Activated naive CD4-positive, alpha-beta T cell treated with anti-CD3 and anti-CD28 coated beads for 36 hours (primary cell): ENCODE measurements at regions of chr12 and their contacts with region 1.

Region 1: DNA sequence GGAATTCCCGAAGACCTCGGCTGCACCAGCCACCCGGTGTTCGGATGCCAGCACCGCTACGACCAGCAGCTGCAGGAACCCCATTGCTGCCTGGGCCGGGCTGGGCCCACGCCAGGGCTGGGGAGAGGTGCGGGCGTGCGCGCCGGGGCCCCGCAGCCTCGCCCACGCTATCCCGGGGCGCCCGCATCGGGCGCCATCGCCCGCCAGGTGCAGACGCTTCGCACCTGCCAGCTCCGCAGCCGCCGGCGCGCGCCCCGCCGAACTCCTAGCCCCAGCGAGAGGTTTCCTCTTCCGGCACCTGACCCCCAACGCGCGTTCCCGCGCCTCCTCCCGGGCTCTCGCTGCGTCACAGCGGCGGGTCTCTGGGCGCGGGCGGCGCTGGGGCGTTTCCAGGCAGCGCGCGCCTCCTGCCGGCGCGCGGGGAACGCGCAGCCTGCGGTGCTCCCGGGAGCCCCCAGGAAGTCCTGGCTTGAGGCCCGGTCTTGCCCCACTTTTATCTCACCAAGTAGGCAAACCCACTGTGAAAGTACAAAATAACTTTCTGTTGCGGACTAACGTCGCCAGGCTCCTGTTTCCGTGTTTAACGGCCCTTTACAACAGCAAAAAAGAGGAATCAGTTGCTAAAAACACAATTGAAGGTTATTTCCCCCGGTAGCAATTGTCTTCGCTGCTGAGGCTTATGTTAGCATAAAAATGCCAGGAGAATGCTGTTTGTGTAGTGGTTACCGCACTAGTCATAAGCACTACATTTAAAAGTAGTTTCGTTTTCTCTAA is at the start of gene TM7SF3:
- DNase-seq: peak; percentile 96
- H3K4me3 Mint-ChIP-seq: peak within 1 kb of the TSS; percentile 91
- H3K27ac Mint-ChIP-seq: peak within 1 kb of the TSS; percentile 88
- H3K4me1 Mint-ChIP-seq: peaks cover 45% of the 10 kb centered on the region
- H3K27me3 Mint-ChIP-seq: no peaks in the 10 kb centered on the region
- total RNA-seq, gene TM7SF3: 39.1 to 42.8 TPM

Region 2: DNA sequence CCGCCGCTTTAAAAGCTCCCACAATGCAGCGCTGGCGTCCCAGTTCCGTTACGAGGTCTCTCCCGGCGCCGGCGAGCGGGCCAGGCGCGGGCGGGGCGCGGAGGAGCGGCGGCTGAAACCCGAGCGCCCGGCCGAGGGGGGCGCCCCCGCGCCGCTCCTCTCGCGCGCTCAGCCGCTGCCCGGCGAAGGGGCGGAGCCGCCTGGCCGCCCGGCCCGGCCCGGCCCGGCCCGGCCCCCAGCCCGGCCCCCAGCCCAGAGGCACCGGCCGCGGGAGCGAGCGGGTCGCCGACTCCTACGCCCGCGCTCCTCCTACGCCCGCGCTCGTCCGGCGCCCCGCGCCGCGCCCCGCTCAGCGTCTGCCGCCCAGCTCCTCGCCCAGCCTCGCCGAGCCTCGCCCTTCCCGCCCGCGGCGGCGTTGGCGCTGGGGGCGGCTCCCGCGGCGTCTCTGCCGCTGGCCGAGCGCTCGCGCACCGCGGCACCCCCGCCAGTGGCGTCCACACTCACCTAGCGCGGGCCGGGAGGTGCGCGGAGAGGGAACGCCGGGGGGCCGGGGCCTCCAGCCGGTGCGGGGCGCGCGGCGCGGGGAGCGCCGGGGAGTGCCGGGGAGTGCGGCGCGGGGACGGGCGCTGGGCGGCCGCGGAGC is 1055.7 kb before region 1 on chr12 and contains the start of gene RASSF8:
- CTCF ChIA-PET with region 1: no interaction called
- intact Hi-C with region 1: loop called (anchors 10 kb)
- DNase-seq: peak; percentile 23
- H3K4me3 Mint-ChIP-seq: peak within 1 kb of the TSS; percentile 78
- H3K27ac Mint-ChIP-seq: no peak within 1 kb of the TSS
- H3K4me1 Mint-ChIP-seq: peaks cover 11% of the 10 kb centered on the region
- H3K27me3 Mint-ChIP-seq: peaks cover 58% of the 10 kb centered on the region
- total RNA-seq, gene RASSF8: 0.32 to 0.81 TPM

Region 3: DNA sequence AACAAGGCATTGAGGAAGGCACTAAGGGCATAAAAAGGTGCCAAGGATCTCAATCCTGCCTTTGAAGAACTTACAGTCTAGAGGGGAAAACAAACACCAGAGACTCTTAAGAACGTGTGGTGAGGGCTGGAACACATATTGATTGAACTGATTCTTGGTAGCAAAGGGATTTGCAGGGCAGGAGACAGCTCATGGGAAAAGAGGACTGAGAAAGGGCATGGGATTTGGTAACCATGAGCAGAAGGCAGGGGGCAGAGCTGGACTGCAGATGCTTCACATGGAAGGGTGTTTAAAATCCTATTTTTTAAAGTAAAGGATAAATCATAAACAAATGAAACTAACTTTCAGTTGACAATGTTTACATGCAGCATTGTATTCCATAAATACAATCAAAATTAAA is 384.4 kb before region 1 on chr12:
- CTCF ChIA-PET with region 1: no interaction called
- intact Hi-C with region 1: loop called (anchors 2 kb)
- DNase-seq: peak; percentile 11
- H3K4me3 Mint-ChIP-seq: no peak overlapping the region
- H3K27ac Mint-ChIP-seq: no peak overlapping the region
- H3K4me1 Mint-ChIP-seq: no peaks in the 10 kb centered on the region
- H3K27me3 Mint-ChIP-seq: no peaks in the 10 kb centered on the region

Region 4: GRCh38 chr12:26845057-26845666 is 169.1 kb before region 1 on chr12:
- CTCF ChIA-PET with region 1: no interaction called
- intact Hi-C with region 1: no loop called
- DNase-seq: peak; percentile 24
- H3K4me3 Mint-ChIP-seq: no peak overlapping the region
- H3K27ac Mint-ChIP-seq: no peak overlapping the region
- H3K4me1 Mint-ChIP-seq: peaks cover 10% of the 10 kb centered on the region
- H3K27me3 Mint-ChIP-seq: peaks cover 9% of the 10 kb centered on the region

Region 5: GRCh38 chr12:26884765-26885576 is 129.3 kb before region 1 on chr12:
- CTCF ChIA-PET with region 1: interaction called, 10 read pairs
- intact Hi-C with region 1: loop called (anchors 1 kb)
- DNase-seq: peak; percentile 92
- H3K4me3 Mint-ChIP-seq: peak overlapping the region; percentile 58
- H3K27ac Mint-ChIP-seq: no peak overlapping the region
- H3K4me1 Mint-ChIP-seq: peaks cover 6% of the 10 kb centered on the region
- H3K27me3 Mint-ChIP-seq: peaks cover 10% of the 10 kb centered on the region

Region 6: GRCh38 chr12:27052176-27052575 is 37.9 kb after region 1 on chr12:
- CTCF ChIA-PET with region 1: no interaction called
- intact Hi-C with region 1: no loop called
- DNase-seq: no peak
- H3K4me3 Mint-ChIP-seq: no peak overlapping the region
- H3K27ac Mint-ChIP-seq: no peak overlapping the region
- H3K4me1 Mint-ChIP-seq: no peaks in the 10 kb centered on the region
- H3K27me3 Mint-ChIP-seq: no peaks in the 10 kb centered on the region

Region 7: GRCh38 chr12:27142101-27142721 is 127.9 kb after region 1 on chr12:
- CTCF ChIA-PET with region 1: interaction called, 3 read pairs
- intact Hi-C with region 1: loop called (anchors 1 kb)
- DNase-seq: peak; percentile 61
- H3K4me3 Mint-ChIP-seq: no peak overlapping the region
- H3K27ac Mint-ChIP-seq: no peak overlapping the region
- H3K4me1 Mint-ChIP-seq: peaks cover 10% of the 10 kb centered on the region
- H3K27me3 Mint-ChIP-seq: no peaks in the 10 kb centered on the region

Region 8: DNA sequence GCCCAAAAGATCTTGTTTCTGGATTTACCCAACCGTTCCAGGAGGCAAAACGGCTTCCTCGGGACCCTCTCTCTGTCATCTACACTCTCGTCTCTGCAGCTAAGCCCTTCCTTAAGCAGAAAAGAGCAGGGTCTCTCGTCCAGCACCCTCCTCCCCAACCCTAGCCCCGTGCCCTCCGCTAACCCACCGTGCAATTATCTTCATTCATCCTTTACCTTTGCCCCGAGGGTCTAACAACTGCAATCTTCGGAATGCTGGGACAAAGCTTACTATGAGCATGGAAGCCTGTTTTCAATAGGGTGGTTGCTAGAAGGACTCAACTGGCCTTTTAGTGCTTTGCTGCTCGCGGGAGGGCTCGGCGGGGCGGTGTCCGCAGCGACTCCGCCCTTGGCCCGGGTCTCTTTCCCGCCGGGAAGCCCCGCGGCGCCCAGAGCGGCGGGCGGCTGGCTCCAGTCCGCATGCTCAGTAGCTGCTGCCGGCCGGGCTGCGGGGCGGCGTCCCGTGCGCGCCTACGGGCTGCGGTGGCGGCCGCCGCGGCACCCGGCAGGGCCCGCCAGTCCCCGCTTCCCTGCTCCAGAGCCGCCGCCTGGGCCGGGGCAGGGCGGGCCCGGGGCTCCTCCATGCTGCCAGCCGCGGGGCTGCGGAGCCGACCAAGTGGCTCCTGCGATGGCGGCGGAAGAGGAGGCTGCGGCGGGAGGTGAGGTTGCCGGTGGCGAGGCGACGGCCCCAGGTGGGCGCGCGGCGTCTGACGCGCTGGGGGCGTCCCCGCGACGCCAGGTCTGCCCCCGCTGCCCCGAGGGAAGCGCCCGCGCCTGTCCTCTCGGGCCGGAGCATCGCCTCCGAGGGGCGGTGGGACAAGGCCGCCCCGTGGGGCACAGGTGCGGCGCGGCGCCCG is 318.4 kb after region 1 on chr12 and contains the start of gene BMAL2:
- CTCF ChIA-PET with region 1: no interaction called
- intact Hi-C with region 1: loop called (anchors 1 kb)
- DNase-seq: peak; percentile 44
- H3K4me3 Mint-ChIP-seq: peak within 1 kb of the TSS; percentile 90
- H3K27ac Mint-ChIP-seq: peak within 1 kb of the TSS; percentile 74
- H3K4me1 Mint-ChIP-seq: peaks cover 34% of the 10 kb centered on the region
- H3K27me3 Mint-ChIP-seq: peaks cover 30% of the 10 kb centered on the region
- total RNA-seq, gene BMAL2: 7.9 to 9.2 TPM

Region 9: GRCh38 chr12:27703710-27704452 is 689.6 kb after region 1 on chr12:
- CTCF ChIA-PET with region 1: no interaction called
- intact Hi-C with region 1: loop called (anchors 1 kb)
- DNase-seq: peak; percentile 92
- H3K4me3 Mint-ChIP-seq: no peak overlapping the region
- H3K27ac Mint-ChIP-seq: no peak overlapping the region
- H3K4me1 Mint-ChIP-seq: peaks cover 2% of the 10 kb centered on the region
- H3K27me3 Mint-ChIP-seq: no peaks in the 10 kb centered on the region